Heart left ventricle (tissue), 16 donors: ENCODE measurements at regions of chr22 and their contacts with region 1.

Region 1: GRCh38 chr22:31630331-31631329 is 31.4 kb downstream of the PISD start:
- DNase-seq: peak; percentile 87 to 90 (median 88)
- ATAC-seq: peak; percentile 43 to 88 (median 87)
- H3K4me3 ChIP-seq: peak overlapping the region; percentile 63 to 95 (median 84)
- H3K27ac ChIP-seq: peak overlapping the region; percentile 81 to 98 (median 91)
- H3K4me1 ChIP-seq: peaks cover 3 to 64% (median 43%) of the 10 kb centered on the region in 12 donors
- H3K27me3 ChIP-seq: no peaks in the 10 kb centered on the region
- CTCF ChIP-seq: no peak
- POLR2A ChIP-seq: peak in 1 of 2 donors; percentile 23

Region 2: DNA sequence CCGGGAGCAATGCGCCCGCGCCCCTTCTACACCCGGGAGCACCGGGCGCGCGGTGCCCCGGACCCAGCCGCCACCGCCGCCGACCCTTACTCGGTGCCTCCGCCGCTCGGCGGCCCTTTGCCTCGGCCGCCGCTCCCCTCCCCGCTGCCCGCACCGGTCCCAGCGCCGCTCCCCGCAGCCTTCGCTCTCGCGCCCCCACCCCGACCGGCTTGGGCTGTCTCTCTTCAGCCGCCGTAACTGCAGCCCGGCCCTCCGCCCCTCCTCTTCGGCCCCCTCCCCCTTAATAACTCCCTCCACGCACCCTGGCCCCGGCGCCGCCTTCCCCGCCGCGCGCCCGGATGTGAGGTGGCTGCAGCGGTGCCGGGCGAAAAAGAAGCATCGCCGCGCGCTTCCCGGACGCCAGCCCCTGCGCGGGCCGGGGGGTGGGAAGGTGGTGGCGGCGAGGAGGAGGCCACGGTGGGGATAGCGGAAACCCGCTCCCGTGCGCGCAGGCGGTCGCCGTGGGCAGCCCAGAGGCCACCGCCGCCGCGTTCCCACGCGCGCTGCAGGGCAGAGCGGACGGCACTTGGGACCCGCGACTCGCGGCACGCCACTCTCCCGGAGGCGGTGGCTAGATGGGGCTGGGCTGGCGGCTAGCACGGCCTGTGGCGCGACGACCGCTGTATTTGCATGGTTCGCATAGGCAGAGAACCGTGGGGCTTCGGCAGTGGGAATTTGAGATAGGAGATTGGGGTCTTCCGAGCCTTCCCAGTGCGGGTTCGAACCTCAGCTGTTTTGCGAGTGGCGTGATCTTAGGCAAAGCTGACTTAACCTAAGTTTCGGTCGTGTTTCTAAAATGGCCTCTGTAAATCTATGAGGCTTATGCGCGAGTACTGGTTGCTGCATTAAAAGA is 140.8 kb before region 1 on chr22 and contains the start of gene EIF4ENIF1:
- intact Hi-C with region 1: loop called in 4 of 10 experiments (anchors 5 to 10 kb)
- DNase-seq: peak; percentile 91 to 94 (median 92)
- ATAC-seq: peak; percentile 87 to 97 (median 96)
- H3K4me3 ChIP-seq: peak within 1 kb of the TSS; percentile 56 to 98 (median 84)
- H3K27ac ChIP-seq: peak within 1 kb of the TSS; percentile 91 to 99 (median 96)
- H3K4me1 ChIP-seq: peaks cover under 1 to 42% (median 21%) of the 10 kb centered on the region in 12 donors
- H3K27me3 ChIP-seq: no peaks in the 10 kb centered on the region
- CTCF ChIP-seq: no peak
- POLR2A ChIP-seq: peak in 1 of 2 donors; percentile 75
- total RNA-seq, gene EIF4ENIF1: 12.1 to 31.2 (median 23.8) TPM

Region 3: GRCh38 chr22:31561238-31561887 is 69.3 kb before region 1 on chr22:
- intact Hi-C with region 1: loop called in 9 of 10 experiments (anchors 1 to 5 kb)
- DNase-seq: peak; percentile 57 to 74 (median 69)
- ATAC-seq: peak; percentile 83 to 98 (median 96)
- H3K4me3 ChIP-seq: no peak overlapping the region
- H3K27ac ChIP-seq: no peak overlapping the region
- H3K4me1 ChIP-seq: peaks cover 0 to 6% (median 0%) of the 10 kb centered on the region in 12 donors
- H3K27me3 ChIP-seq: no peaks in the 10 kb centered on the region
- CTCF ChIP-seq: peak; percentile 59 to 79 (median 68)
- POLR2A ChIP-seq: no peak